ENCODE measurements at regions of chr10 and their contacts with region 1.

Region 1: GRCh38 chr10:52566471-52567246 is 205.9 kb downstream of the MBL2 start:
- DNase-seq: no peak
- H3K4me3 ChIP-seq: no peak overlapping the region
- H3K27ac ChIP-seq: no peak overlapping the region
- H3K4me1 ChIP-seq: no peaks in the 10 kb centered on the region
- H3K27me3 ChIP-seq: no peaks in the 10 kb centered on the region
- CTCF ChIP-seq: peak in 2 of 3 experiments; percentile 15 to 29

Region 2: DNA sequence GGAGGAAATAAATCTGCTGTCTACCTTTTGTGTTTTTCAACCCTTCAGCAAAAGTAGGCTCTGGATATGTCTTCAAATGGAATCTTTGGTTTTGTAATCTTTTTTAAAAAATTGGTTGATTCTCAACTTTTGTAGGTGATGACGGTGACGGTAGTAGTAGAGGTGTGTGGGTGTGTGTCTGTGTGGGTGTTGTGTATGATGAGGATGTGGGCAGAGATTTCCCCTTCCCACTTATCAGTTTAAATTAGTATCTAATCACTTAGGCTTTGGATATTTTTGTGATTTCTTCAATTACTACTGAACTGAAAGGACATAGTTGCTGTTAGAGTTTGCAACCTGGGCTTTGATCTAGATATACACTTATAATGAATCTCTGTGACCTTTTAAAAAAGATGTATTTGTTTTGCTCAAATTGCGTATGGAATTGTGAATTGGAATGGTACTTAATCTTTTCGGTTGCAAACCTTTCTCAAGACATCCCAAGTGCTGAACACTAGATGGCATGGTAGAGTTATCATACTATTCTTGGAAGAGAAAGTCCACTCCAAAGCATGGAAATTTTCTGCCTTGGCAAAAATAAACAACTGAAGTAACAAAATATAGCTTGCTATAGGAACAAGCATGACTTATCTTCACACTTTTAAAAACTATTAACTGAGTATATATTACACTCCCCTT is 1629.3 kb before region 1 on chr10:
- intact Hi-C with region 1: loop called (anchors 5 kb)
- DNase-seq: no peak
- H3K4me3 ChIP-seq: no peak overlapping the region
- H3K27ac ChIP-seq: no peak overlapping the region
- H3K4me1 ChIP-seq: no peaks in the 10 kb centered on the region
- H3K27me3 ChIP-seq: no peaks in the 10 kb centered on the region
- CTCF ChIP-seq: peak in 2 of 3 experiments; percentile 49 to 58

Region 3: GRCh38 chr10:52615756-52616394 is 49.2 kb after region 1 on chr10:
- intact Hi-C with region 1: no loop called
- DNase-seq: no peak
- H3K4me3 ChIP-seq: no peak overlapping the region
- H3K27ac ChIP-seq: no peak overlapping the region
- H3K4me1 ChIP-seq: no peaks in the 10 kb centered on the region
- H3K27me3 ChIP-seq: no peaks in the 10 kb centered on the region
- CTCF ChIP-seq: no peak

Region 4: GRCh38 chr10:53108317-53108934 is 541.8 kb after region 1 on chr10:
- intact Hi-C with region 1: no loop called
- DNase-seq: no peak
- H3K4me3 ChIP-seq: no peak overlapping the region
- H3K27ac ChIP-seq: no peak overlapping the region
- H3K4me1 ChIP-seq: no peaks in the 10 kb centered on the region
- H3K27me3 ChIP-seq: no peaks in the 10 kb centered on the region
- CTCF ChIP-seq: no peak